Caco-2 (cell line): ENCODE measurements at regions of chr14 and their contacts with region 1.

Region 1: GRCh38 chr14:68401855-68402254 is 391.0 kb downstream of the ZFP36L1 start:
- DNase-seq: no peak
- H3K4me3 ChIP-seq: no peak overlapping the region
- H3K4me3 Mint-ChIP-seq: no peak overlapping the region
- H3K27ac Mint-ChIP-seq: no peak overlapping the region
- H3K4me1 ChIP-seq: peaks cover 50% of the 10 kb centered on the region
- H3K4me1 Mint-ChIP-seq: peaks cover 28% of the 10 kb centered on the region
- H3K27me3 ChIP-seq: no peaks in the 10 kb centered on the region
- H3K27me3 Mint-ChIP-seq: no peaks in the 10 kb centered on the region
- CTCF ChIP-seq: no peak

Region 2: GRCh38 chr14:68369281-68370056 is 32.4 kb before region 1 on chr14:
- CTCF ChIA-PET with region 1: no interaction called
- POLR2A ChIA-PET with region 1: no interaction called
- intact Hi-C with region 1: loop called (anchors 1 kb)
- DNase-seq: no peak
- H3K4me3 ChIP-seq: no peak overlapping the region
- H3K4me3 Mint-ChIP-seq: no peak overlapping the region
- H3K27ac Mint-ChIP-seq: no peak overlapping the region
- H3K4me1 ChIP-seq: peaks cover 26% of the 10 kb centered on the region
- H3K4me1 Mint-ChIP-seq: peaks cover 37% of the 10 kb centered on the region
- H3K27me3 ChIP-seq: no peaks in the 10 kb centered on the region
- H3K27me3 Mint-ChIP-seq: no peaks in the 10 kb centered on the region
- CTCF ChIP-seq: no peak

Region 3: DNA sequence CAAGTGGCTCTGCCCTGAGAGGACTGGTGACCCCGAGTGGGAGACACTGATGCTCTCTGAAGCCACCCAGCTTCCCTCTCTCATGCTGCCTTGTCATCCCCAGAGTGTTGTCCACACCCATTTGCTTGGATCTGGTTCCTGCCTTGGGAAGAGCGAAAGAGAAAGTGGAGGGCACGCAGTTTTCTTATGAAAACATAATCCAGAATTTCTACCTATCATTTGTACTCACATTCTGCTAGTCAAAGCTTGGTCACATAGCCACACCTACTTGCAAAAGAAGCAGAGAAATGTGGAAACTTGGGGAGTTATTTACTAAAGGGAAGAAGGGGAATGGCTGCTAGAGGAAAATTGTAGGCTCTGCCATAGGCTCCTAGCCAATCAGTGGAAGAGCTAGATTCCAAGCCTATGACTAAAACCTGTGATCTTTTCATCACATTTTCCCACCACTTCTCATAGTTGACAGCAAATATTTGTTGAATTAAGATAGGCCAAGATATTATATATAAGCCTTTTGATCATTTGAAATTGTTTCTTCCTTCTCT is 64.7 kb after region 1 on chr14:
- CTCF ChIA-PET with region 1: no interaction called
- POLR2A ChIA-PET with region 1: interaction called, 3 read pairs
- intact Hi-C with region 1: loop called (anchors 5 kb)
- DNase-seq: peak; percentile 45 to 56
- H3K4me3 ChIP-seq: no peak overlapping the region
- H3K4me3 Mint-ChIP-seq: no peak overlapping the region
- H3K27ac Mint-ChIP-seq: peak overlapping the region; percentile 48
- H3K4me1 ChIP-seq: peaks cover 59% of the 10 kb centered on the region
- H3K4me1 Mint-ChIP-seq: peaks cover 52% of the 10 kb centered on the region
- H3K27me3 ChIP-seq: no peaks in the 10 kb centered on the region
- H3K27me3 Mint-ChIP-seq: no peaks in the 10 kb centered on the region
- CTCF ChIP-seq: no peak